Transverse colon (tissue), 4 donors: ENCODE measurements at regions of chr4 and their contacts with region 1.

Region 1: DNA sequence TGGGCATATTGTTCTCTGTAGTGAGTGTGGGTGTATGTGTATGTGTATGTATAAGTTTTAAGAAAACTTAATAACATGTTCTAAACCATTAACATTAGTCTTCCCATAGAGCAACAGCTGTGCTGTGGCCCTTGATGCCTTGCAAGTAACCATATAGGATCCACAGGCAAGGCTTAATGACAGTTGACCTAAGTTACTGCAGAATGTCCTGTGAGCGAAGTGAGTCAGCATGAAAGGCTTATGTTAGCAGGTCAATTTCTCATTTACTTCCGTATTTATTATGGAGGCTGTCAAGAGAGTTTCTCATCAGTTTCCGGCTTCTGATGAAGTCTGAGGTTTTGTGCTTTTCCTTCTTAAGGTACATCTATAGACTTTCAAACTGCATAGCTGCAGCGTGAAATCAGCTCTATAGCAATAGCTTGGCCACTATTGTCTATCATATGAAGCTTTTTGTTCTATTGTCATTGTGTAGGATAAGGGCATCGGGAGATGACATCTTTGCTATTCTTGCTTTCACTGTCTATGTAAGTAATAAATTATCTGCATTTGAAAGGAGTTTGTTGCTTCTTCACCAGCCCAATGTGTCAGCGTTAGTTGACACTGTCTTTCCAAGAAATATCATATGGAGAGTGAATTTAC is 1153.4 kb upstream of the AGA start:
- DNase-seq: no peak
- H3K4me3 ChIP-seq: no peak overlapping the region
- H3K27ac ChIP-seq: no peak overlapping the region
- H3K4me1 ChIP-seq: no peaks in the 10 kb centered on the region
- H3K27me3 ChIP-seq: no peaks in the 10 kb centered on the region
- CTCF ChIP-seq: no peak
- EP300 ChIP-seq: no peak
- POLR2A ChIP-seq: no peak

Region 2: DNA sequence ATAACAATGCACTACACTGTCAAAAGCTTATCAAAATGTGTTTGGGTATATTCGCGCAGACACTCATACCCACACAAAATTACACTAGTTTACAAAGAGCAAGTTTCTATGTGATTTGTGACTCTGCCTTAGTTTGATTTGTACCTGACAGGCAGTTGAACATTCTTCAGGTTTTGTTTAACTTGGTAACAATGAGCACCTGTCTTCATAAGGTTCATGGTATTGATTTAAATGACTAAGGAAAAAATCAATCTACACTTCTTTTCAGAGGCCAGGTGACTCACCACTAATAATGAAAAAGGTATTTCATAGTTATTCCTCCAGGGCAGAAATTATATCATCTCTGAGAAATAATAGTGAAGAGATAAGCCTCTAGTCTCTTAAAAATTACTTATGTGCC is 38.8 kb before region 1 on chr4:
- in situ Hi-C with region 1: no loop called
- intact Hi-C with region 1: loop called (anchors 2 kb)
- DNase-seq: no peak
- H3K4me3 ChIP-seq: no peak overlapping the region
- H3K27ac ChIP-seq: no peak overlapping the region
- H3K4me1 ChIP-seq: no peaks in the 10 kb centered on the region
- H3K27me3 ChIP-seq: no peaks in the 10 kb centered on the region
- CTCF ChIP-seq: no peak
- EP300 ChIP-seq: no peak
- POLR2A ChIP-seq: no peak